Testis (tissue), 5 donors: ENCODE measurements at regions of chr3 and their contacts with region 1.

Region 1: GRCh38 chr3:98151241-98151640 is 4.0 kb downstream of the OR5H14 start:
- DNase-seq: no peak
- H3K4me3 ChIP-seq: no peak overlapping the region
- H3K27ac ChIP-seq: no peak overlapping the region
- H3K4me1 ChIP-seq: no peaks in the 10 kb centered on the region
- H3K27me3 ChIP-seq: no peaks in the 10 kb centered on the region
- CTCF ChIP-seq: no peak
- POLR2A ChIP-seq: no peak

Region 2: DNA sequence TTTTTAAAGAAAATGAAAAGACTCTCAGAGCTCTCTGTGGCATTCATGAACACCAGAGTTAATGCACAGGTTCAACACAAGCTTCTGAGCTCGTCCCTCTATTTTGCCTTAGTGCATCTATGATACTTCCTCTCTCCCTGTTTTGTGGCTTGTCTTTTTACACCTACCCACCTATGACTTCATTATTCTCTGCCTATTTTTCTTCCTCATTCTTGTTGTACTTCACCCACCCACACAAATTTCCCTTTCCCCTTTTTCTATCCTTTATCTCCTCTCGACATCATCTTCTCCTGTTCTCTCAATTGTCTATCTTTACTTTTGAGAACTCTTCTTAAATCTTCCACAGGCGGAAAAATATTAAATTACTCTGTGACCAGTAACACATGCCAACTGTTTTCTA is 63.8 kb after region 1 on chr3:
- intact Hi-C with region 1: loop called (anchors 10 kb)
- DNase-seq: no peak
- H3K4me3 ChIP-seq: no peak overlapping the region
- H3K27ac ChIP-seq: no peak overlapping the region
- H3K4me1 ChIP-seq: no peaks in the 10 kb centered on the region
- H3K27me3 ChIP-seq: no peaks in the 10 kb centered on the region
- CTCF ChIP-seq: no peak
- POLR2A ChIP-seq: no peak